ENCODE measurements at regions of chr12 and their contacts with region 1.

Region 1: GRCh38 chr12:120086801-120087621 is 29.5 kb downstream of the RAB35 start:
- DNase-seq: peak; percentile 98
- H3K4me3 Mint-ChIP-seq: peak overlapping the region; percentile 70
- H3K27ac Mint-ChIP-seq: peak overlapping the region; percentile 79
- H3K4me1 Mint-ChIP-seq: peaks cover 23% of the 10 kb centered on the region
- H3K27me3 Mint-ChIP-seq: no peaks in the 10 kb centered on the region
- CTCF ChIP-seq: peak; percentile 95

Region 2: GRCh38 chr12:119835068-119835467 is 251.9 kb before region 1 on chr12:
- CTCF ChIA-PET with region 1: no interaction called
- POLR2A ChIA-PET with region 1: no interaction called
- intact Hi-C with region 1: no loop called
- DNase-seq: peak; percentile 61
- H3K4me3 Mint-ChIP-seq: no peak overlapping the region
- H3K27ac Mint-ChIP-seq: peak overlapping the region; percentile 16
- H3K4me1 Mint-ChIP-seq: no peaks in the 10 kb centered on the region
- H3K27me3 Mint-ChIP-seq: no peaks in the 10 kb centered on the region
- CTCF ChIP-seq: no peak

Region 3: DNA sequence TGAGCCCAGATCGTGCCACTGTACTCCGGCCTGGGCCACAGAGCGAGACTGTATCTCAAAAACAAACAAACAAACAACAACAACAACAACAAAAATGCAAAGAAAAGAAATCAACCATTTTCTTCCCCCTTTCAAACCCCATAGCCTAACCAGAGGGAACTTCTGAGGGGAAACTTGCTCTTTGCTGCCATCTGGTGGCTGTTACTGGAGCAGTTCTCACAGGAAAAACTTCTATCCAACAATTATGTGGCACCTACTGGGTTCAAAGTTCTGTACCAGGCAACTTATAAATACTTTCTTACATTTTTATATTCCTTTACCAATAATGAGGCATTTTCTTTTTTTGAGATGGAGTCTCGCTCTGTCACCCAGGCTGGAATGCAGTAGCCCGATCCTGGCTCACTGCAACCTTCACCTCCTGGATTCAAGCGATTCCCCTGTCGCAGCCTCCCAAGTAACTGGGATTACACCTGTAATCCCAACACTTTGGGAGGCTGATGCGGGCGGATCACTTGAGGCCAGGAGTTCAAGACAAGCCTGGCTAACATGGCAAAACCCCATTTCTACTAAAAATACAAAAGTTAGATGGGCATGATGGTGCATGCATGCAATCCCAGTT is 148.9 kb before region 1 on chr12:
- CTCF ChIA-PET with region 1: interaction called, 4 read pairs
- POLR2A ChIA-PET with region 1: interaction called, 3 read pairs
- intact Hi-C with region 1: loop called (anchors 2 kb)
- DNase-seq: peak; percentile 73
- H3K4me3 Mint-ChIP-seq: no peak overlapping the region
- H3K27ac Mint-ChIP-seq: no peak overlapping the region
- H3K4me1 Mint-ChIP-seq: no peaks in the 10 kb centered on the region
- H3K27me3 Mint-ChIP-seq: no peaks in the 10 kb centered on the region
- CTCF ChIP-seq: peak; percentile 74

Region 4: DNA sequence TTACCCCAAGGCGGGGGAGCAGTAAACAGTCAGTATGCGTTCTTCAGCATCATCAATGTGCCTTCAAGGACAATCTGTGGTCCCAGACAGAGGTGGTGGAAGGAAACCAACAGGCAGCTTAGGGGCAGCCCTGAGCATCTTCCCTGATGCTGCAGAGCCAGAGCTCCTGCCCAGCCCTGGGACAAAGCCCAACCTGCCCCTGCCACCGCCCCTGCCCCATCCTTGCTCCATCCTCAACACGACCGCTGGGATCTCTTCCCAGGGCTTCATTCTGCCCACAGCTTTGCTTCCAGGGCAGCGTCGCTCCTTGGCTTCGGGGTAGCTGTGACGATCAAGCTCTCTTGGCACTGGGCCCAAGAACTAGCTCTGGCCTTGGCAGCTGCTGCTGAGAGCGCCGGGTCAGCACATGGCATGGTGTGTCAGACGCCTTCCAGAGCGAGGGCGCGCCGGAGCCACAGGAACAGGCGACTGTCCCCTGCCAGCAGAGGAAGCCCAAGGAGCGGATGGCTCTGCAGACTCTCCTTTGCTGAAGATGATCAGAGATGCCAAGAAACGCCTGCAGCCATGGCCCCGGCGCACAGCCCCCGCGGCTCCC is 13.5 kb after region 1 on chr12:
- CTCF ChIA-PET with region 1: interaction called, 10 read pairs
- POLR2A ChIA-PET with region 1: no interaction called
- intact Hi-C with region 1: no loop called
- DNase-seq: no peak
- H3K4me3 Mint-ChIP-seq: no peak overlapping the region
- H3K27ac Mint-ChIP-seq: no peak overlapping the region
- H3K4me1 Mint-ChIP-seq: peaks cover 7% of the 10 kb centered on the region
- H3K27me3 Mint-ChIP-seq: no peaks in the 10 kb centered on the region
- CTCF ChIP-seq: no peak